Natural killer cell (primary cell): ENCODE measurements at regions of chr22 and their contacts with region 1.

Region 1: GRCh38 chr22:29524440-29525191 is 28.9 kb downstream of the THOC5 start:
- DNase-seq: peak; percentile 17 to 40
- ATAC-seq: peak; percentile 50 to 67 (median 57)
- H3K4me3 ChIP-seq: no peak overlapping the region
- H3K4me3 Mint-ChIP-seq: no peak overlapping the region
- H3K27ac ChIP-seq: no peak overlapping the region
- H3K27ac Mint-ChIP-seq: no peak overlapping the region
- H3K4me1 ChIP-seq: no peaks in the 10 kb centered on the region
- H3K4me1 Mint-ChIP-seq: no peaks in the 10 kb centered on the region
- H3K27me3 ChIP-seq: no peaks in the 10 kb centered on the region
- H3K27me3 Mint-ChIP-seq: no peaks in the 10 kb centered on the region
- CTCF ChIP-seq: no peak

Region 2: GRCh38 chr22:29394931-29395581 is 129.6 kb before region 1 on chr22:
- intact Hi-C with region 1: loop called (anchors 1 kb)
- DNase-seq: peak; percentile 54 to 86
- ATAC-seq: peak; percentile 84 to 100 (median 99)
- H3K4me3 ChIP-seq: no peak overlapping the region
- H3K4me3 Mint-ChIP-seq: no peak overlapping the region
- H3K27ac ChIP-seq: no peak overlapping the region
- H3K27ac Mint-ChIP-seq: no peak overlapping the region
- H3K4me1 ChIP-seq: peaks cover 2% of the 10 kb centered on the region
- H3K4me1 Mint-ChIP-seq: peaks cover 0 to 7% of the 10 kb centered on the region in 2 donors
- H3K27me3 ChIP-seq: no peaks in the 10 kb centered on the region
- H3K27me3 Mint-ChIP-seq: no peaks in the 10 kb centered on the region
- CTCF ChIP-seq: peak; percentile 80